AG04449 (cell line): ENCODE measurements at regions of chr9 and their contacts with region 1.

Region 1: GRCh38 chr9:128117613-128118471 is 9.7 kb downstream of the PTGES2 start:
- DNase-seq: no peak
- H3K4me3 ChIP-seq: peak overlapping the region; percentile 12; the same call in 1 of the 2 replicates
- CTCF ChIP-seq: peak; percentile 100

Region 2: GRCh38 chr9:127930231-127931091 is 187.4 kb before region 1 on chr9 and contains the start of gene PIP5KL1:
- CTCF ChIA-PET with region 1: interaction called, 149 read pairs
- POLR2A ChIA-PET with region 1: no interaction called
- DNase-seq: no peak
- H3K4me3 ChIP-seq: peak within 1 kb of the TSS; percentile 70
- CTCF ChIP-seq: peak; percentile 21

Region 3: DNA sequence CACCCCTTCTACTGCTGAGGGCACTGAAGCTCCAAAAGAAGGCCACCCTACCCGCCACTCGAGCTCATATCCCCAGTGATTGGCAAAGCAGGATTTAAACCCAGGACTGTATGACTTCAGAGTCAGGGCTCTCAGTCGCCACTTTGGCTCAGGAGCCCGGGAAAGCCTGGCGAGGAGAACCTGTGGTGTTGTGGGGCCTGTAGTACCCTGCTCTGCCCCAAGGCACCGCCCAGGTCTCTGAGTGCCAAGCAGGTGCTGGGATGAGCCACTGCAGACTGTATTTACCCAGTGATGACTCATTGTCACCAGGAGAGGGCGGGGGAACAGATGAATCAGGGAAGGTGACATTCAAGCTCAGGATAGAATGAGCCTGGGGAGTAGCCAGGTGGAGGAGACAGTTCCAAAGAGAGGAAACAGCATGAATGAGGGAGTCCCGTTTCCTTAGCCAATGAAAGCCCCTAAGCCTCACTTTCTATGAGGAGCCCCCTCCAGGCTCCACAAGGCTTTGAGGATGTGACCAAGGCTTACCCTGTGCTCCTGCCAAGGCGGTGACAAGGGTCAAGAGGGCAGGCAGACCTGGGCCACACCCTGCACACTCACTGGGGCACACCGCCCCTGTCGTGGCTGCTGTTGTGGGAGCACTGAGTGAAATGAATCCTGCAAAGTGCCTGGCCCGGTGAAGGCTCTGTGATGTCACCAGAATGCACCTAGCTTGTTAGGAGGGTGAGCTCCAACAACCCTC is 162.4 kb before region 1 on chr9:
- CTCF ChIA-PET with region 1: interaction called, 14 read pairs
- POLR2A ChIA-PET with region 1: interaction called, 3 read pairs
- DNase-seq: no peak
- H3K4me3 ChIP-seq: no peak overlapping the region
- CTCF ChIP-seq: no peak

Region 4: GRCh38 chr9:128067876-128068613 is 49.8 kb before region 1 on chr9 and contains the start of gene SLC25A25:
- CTCF ChIA-PET with region 1: interaction called, 36 read pairs
- POLR2A ChIA-PET with region 1: no interaction called
- DNase-seq: peak; percentile 92
- H3K4me3 ChIP-seq: peak within 1 kb of the TSS; percentile 80
- CTCF ChIP-seq: no peak

Region 5: DNA sequence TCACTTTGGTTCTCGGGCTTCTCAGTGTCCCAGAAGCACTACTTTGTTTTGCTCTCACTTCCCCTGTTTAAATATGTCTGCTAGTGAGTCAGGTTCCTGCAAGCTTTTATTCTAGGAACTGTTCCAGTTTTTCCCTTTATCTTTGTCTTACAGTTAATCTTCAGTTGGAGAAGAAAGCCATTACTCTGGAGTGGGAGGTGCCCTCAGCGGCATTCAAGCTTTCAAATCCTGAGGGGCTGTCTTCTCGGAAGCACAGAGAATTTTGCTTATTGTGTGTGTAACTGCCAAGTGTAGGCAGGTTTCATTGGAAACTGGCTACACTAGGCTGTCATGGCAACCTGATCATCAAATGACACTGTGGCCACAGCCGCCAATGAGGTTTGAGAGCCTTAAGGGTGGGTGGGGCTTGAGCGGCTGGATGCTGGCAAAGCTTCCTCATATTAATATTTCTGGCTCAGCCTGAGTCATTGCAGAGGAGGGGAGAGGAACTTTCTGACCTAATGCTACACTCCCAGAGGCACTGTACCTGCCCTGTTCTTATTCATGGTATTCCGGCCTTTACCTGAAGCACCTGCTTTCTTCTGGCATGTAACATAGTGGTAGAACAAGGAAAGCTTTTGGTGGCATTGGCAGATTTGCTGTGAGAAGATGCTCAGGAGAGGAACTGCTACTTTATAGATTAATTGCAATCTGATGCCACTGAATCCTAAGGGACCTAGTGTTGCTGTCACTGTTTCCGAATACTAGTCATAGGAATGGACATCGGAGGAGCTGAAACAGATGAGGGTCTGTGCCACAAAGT is 23.5 kb before region 1 on chr9:
- CTCF ChIA-PET with region 1: interaction called, 264 read pairs
- POLR2A ChIA-PET with region 1: interaction called, 4 read pairs
- DNase-seq: peak; percentile 80
- H3K4me3 ChIP-seq: peak overlapping the region; percentile 32
- CTCF ChIP-seq: no peak

Region 6: DNA sequence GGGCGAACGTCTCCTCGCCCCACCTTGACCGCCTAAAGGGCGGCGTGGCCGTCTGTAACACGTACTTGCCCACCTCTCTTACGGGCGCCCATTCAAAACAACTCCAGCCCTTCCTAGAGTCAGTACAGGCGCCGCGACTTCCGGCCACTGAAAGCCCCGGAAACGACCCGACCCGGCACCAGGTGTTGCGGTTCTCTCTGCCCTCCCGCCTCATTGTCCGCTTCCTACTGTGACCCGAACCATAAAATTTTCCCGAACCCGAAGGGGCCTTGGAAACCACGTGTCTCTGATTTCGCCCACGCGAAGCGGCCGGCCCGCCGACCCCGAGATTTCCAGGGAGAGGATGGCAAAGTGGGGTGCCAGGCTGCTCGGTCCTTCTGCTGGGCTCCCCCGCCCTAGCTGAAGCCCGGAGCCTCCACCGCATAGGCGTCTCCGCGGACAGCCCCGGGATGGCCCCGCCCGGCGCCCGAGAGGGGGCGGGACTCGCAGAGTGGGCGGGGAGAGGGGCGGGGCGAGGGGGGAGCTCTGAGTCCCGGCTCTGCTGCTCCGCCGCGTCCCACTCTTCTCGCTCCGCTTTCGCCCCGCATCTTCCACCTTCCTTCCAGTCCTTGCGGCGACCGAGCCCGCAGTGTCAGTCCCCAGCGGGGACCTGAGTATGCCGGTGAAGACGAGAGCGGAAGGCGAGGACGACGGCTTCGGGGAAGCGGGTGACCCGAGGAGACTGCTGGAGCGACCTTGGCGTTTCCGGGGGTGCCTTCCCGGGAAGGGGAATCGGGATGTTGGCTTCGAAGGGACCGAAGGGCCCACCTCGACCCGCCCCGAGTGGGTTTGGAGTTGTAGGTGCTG is 10.4 kb after region 1 on chr9:
- CTCF ChIA-PET with region 1: interaction called, 112 read pairs
- POLR2A ChIA-PET with region 1: interaction called, 3 read pairs
- DNase-seq: peak; percentile 42
- H3K4me3 ChIP-seq: peak overlapping the region; percentile 95
- CTCF ChIP-seq: no peak

Region 7: GRCh38 chr9:128355451-128355850 is 237.6 kb after region 1 on chr9:
- CTCF ChIA-PET with region 1: no interaction called
- POLR2A ChIA-PET with region 1: no interaction called
- DNase-seq: no peak
- H3K4me3 ChIP-seq: no peak overlapping the region
- CTCF ChIP-seq: no peak